Activated CD4-positive, alpha-beta T cell treated with anti-CD3 and anti-CD28 coated beads, Interleukin-2, amount 10 ng/mL, durations not matched to agents 24 days and 14 days (primary cell): ENCODE measurements at regions of chr14 and their contacts with region 1.

Region 1: DNA sequence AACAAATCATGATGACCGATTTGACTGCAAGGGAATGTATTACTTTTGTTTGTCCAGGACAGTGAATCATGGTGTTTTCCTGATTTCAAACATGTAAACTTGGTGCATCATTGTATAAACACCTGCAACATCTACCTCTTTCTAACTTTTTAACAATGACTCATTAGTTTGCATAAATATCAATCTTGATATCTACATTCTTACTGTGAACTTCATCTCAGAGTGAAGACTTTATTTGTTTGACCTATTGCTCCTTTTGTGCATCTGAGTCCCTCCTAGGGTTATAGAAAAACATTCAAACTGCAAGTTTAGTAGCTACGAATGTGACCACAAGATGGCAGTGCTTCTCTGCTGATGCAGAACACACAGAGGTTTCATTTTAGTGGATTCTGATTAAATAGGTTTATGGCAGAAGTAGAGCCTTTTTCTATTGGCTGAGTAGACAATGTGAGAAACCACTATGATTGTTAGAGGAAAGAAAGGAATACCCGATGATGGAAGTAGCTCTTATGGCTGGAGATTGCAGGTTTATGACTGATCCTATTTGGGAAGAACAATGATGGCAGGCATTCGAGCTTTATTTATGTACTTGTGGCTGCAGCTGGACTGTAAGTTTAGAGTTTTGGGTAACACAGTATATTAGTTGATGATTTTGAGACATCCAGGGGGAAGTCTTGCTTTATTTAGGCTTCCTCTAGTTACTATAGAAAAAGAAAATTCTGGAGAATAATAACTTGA is 244.2 kb upstream of the OR4E1 start:
- DNase-seq: peak; percentile 90
- H3K4me3 Mint-ChIP-seq: peak overlapping the region; percentile 76
- H3K27ac Mint-ChIP-seq: peak overlapping the region; percentile 74
- H3K4me1 Mint-ChIP-seq: peaks cover 47% of the 10 kb centered on the region
- H3K27me3 Mint-ChIP-seq: no peaks in the 10 kb centered on the region

Region 2: DNA sequence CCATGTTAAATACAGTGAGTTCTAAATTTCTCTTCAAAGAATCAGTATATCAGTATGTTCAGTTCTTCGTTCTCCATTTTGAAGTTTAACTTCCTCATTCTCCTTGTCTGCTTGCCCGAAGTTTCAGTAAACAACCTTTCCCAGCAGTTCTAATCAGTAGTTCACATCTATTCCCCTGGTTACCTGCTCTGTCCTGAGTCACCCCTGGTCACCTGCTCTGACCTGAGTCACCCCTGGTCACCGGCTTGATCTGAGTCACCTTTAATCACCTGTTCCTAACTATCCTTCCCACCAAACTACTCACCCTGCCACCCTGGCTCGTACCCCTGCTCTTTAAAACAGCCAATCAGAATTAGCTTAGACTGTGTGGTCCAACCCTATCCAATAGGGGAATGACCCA is 328.6 kb before region 1 on chr14:
- intact Hi-C with region 1: no loop called
- DNase-seq: no peak
- H3K4me3 Mint-ChIP-seq: no peak overlapping the region
- H3K27ac Mint-ChIP-seq: no peak overlapping the region
- H3K4me1 Mint-ChIP-seq: no peaks in the 10 kb centered on the region
- H3K27me3 Mint-ChIP-seq: peaks cover 5% of the 10 kb centered on the region

Region 3: DNA sequence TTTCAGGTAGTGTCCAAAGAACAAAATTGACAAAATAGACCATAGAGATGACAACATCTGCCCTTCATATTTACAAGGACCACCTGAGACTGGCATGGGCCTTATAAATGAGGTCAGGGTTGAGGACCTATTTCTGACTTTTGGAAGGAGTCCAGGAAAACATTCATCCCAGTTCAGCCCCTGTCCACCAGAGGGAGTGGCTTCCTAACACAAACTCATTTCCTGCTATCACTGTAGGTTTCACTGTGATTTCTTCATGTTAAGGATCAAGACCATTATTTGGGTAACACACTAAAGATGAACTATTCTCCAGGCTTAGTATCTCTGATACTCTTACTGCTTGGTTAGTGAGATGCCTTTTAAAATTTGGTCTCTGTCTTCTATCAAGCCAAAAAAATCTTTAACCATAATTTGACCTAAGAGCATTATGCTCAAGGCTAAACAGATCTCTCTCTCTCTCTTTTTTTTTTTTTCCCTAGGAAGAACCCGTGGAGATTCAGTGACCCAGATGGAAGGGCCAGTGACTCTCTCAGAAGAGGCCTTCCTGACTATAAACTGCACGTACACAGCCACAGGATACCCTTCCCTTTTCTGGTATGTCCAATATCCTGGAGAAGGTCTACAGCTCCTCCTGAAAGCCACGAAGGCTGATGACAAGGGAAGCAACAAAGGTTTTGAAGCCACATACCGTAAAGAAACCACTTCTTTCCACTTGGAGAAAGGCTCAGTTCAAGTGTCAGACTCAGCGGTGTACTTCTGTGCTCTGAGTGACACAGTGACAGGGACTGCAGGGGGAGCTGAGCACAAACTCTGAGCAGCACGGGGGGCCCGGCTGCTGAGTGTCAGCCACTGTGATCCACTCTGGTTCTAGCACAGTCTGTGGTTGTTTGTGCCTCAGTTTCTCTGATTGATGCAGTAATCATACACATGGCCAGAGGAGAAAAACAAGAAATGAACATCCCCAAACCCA is 23.3 kb after region 1 on chr14:
- intact Hi-C with region 1: no loop called
- DNase-seq: peak; percentile 76
- H3K4me3 Mint-ChIP-seq: peak overlapping the region; percentile 83
- H3K27ac Mint-ChIP-seq: peak overlapping the region; percentile 83
- H3K4me1 Mint-ChIP-seq: peaks cover 19% of the 10 kb centered on the region
- H3K27me3 Mint-ChIP-seq: peaks cover 34% of the 10 kb centered on the region

Region 4: DNA sequence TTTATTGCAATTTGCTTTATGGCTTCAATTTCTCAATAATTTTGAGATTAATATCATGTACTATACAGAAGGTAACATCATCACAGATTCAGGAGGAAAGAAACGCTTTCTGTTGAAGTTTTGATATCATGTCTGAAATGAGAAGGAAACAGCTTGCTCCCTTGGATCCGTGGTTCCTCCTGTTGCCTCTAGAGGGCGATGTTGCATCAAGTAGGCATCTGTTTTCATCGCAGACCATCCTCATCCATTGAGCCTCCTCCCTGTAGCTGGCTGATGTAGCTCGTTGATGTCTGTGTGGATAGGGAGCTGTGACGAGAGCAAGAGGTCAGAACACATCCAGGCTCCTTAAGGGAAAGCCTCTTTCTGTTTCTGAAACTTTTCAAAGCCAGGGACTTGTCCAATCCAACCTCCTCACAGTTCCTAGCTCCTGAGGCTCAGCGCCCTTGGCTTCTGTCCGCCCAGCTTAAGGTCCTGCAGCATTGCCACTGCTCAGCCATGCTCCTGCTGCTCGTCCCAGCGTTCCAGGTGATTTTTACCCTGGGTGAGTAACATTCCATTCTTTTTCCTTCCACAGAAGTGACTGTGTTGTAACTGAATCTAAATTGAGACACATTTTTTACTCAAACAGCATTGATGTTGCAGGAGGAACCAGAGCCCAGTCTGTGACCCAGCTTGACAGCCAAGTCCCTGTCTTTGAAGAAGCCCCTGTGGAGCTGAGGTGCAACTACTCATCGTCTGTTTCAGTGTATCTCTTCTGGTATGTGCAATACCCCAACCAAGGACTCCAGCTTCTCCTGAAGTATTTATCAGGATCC is 60.5 kb after region 1 on chr14:
- intact Hi-C with region 1: loop called (anchors 5 kb)
- DNase-seq: peak; percentile 91
- H3K4me3 Mint-ChIP-seq: peak overlapping the region; percentile 78
- H3K27ac Mint-ChIP-seq: peak overlapping the region; percentile 65
- H3K4me1 Mint-ChIP-seq: peaks cover 13% of the 10 kb centered on the region
- H3K27me3 Mint-ChIP-seq: peaks cover 21% of the 10 kb centered on the region

Region 5: GRCh38 chr14:21990116-21990515 is 72.2 kb after region 1 on chr14:
- intact Hi-C with region 1: no loop called
- DNase-seq: peak; percentile 61
- H3K4me3 Mint-ChIP-seq: peak overlapping the region; percentile 67
- H3K27ac Mint-ChIP-seq: peak overlapping the region; percentile 70
- H3K4me1 Mint-ChIP-seq: peaks cover 21% of the 10 kb centered on the region
- H3K27me3 Mint-ChIP-seq: peaks cover 6% of the 10 kb centered on the region

Region 6: DNA sequence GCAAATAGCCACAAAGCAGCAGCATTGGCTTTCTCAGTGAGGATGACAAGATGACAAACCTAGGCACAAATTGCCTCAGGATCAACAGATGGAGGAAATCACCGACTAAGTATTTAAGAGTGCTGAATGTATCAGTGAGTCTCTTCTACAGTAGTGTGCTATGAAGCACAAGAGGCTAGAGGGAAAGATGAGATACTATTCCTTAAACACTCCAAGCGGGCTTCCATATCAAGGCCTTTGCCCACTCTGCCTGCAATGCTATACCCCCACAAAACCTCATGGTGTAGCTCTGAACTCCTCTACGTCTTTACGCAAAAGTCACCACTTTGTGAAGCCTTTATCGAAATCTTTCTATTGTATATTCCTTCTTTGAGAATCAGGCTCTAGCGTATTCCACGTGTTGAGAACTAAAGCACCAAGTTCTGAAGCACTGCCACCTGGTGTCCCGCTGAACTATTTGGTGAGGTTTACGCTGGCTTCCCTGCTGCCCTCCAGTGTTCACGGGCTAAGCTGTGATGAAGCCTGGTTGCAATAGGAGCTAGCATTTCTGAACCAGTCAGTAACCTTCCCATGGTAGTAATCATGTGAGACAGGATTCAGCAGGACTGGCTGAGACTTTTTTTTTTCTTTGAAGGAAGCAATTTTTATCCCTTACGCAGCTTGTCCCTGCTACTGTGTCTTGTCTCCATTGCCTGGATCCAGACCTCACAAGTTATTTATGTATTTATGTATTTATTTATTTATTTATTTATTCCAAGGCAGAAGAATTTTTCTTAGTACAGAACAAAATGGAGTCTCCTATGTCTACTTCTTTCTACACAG is 182.3 kb after region 1 on chr14:
- intact Hi-C with region 1: loop called (anchors 10 kb)
- DNase-seq: peak; percentile 87
- H3K4me3 Mint-ChIP-seq: no peak overlapping the region
- H3K27ac Mint-ChIP-seq: peak overlapping the region; percentile 56
- H3K4me1 Mint-ChIP-seq: peaks cover 38% of the 10 kb centered on the region
- H3K27me3 Mint-ChIP-seq: no peaks in the 10 kb centered on the region